H1 (cell line): ENCODE measurements at regions of chr16 and their contacts with region 1.

Region 1: GRCh38 chr16:28964072-28964471 is 10.5 kb upstream of the SPNS1 start:
- DNase-seq: no peak
- H3K4me3 ChIP-seq: no peak overlapping the region
- H3K27ac ChIP-seq: no peak overlapping the region
- H3K4me1 ChIP-seq: no peaks in the 10 kb centered on the region
- H3K27me3 ChIP-seq: no peaks in the 10 kb centered on the region
- CTCF ChIP-seq: no peak
- EP300 ChIP-seq: no peak
- POLR2A ChIP-seq: no peak
- RAD21 ChIP-seq: no peak

Region 2: DNA sequence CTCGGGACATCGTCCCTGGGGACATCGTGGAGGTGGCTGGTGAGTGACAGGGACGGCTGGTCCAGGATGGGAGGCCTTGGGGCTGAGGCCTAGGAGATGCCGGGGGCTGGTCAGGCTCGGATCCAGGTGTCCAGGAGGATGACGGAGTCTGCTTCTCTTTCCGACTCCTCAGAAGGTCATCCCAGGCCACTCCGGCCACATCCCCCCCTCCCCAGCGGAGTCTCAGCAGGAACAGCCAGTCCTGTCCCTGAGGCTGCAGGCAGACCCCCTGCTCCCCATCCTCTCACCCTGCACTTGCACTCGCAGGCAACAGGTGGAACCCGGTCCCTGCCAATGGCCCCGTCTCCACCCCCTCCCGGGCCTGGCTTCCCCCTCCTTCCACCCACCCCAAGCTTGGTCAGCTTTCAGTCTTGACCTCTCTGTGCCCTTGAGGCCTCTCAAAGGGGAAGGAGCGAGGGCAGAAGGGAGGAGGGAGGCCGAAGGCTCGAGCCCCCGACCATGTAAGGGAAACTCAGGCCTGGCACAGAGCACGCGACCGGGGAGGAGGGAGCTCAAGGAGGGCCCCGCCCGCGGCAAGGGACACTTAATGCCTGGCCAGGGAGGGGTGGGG is 81.4 kb before region 1 on chr16:
- CTCF ChIA-PET with region 1: no interaction called
- POLR2A ChIA-PET with region 1: no interaction called
- DNase-seq: no peak
- H3K4me3 ChIP-seq: no peak overlapping the region
- H3K27ac ChIP-seq: no peak overlapping the region
- H3K4me1 ChIP-seq: peaks cover 0 to 29% (median 23%) of the 10 kb centered on the region in 4 experiments; a peak in 6 of 7 replicates
- H3K27me3 ChIP-seq: peaks cover 0 to 8% (median 7%) of the 10 kb centered on the region in 4 experiments; a peak in 2 of 7 replicates
- CTCF ChIP-seq: peak; percentile 33 to 53 (median 45)
- EP300 ChIP-seq: no peak
- POLR2A ChIP-seq: no peak
- RAD21 ChIP-seq: peak; percentile 57 to 65; a peak in 3 of 4 replicates

Region 3: DNA sequence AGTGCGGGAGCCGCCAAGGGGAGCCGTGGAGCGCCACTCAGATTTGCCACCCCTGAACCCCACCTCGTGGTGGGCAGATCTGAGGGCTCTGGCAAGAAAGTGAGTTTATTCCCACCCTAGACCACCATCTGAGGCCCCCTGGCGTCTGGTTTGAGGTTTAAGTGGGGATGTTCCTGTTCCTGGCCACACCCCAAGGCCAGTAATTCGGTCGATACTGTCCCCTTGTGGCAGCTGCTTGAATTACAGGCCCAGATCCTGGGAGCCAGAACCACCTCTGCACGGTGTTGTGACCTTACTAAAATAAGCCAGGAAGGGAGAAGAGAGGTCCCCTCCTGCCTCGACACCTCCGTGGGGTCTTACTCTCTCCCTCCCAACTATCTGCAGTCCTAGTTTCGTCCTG is 17.4 kb after region 1 on chr16:
- CTCF ChIA-PET with region 1: interaction called, 14 read pairs
- POLR2A ChIA-PET with region 1: interaction called, 10 read pairs
- DNase-seq: peak in 1 of 2 experiments; percentile 90
- H3K4me3 ChIP-seq: no peak overlapping the region
- H3K27ac ChIP-seq: no peak overlapping the region
- H3K4me1 ChIP-seq: no peaks in the 10 kb centered on the region
- H3K27me3 ChIP-seq: no peaks in the 10 kb centered on the region
- CTCF ChIP-seq: peak; percentile 85 to 94 (median 88)
- EP300 ChIP-seq: no peak
- POLR2A ChIP-seq: no peak
- RAD21 ChIP-seq: peak; percentile 43 to 50; a peak in 3 of 4 replicates